ENCODE measurements at regions of chr6 and their contacts with region 1.

Region 1: GRCh38 chr6:160041608-160042007 is 72.7 kb downstream of the IGF2R start:
- DNase-seq: peak in 1 of 2 donors; percentile 67
- ATAC-seq: peak; percentile 58
- H3K4me3 ChIP-seq: no peak overlapping the region
- H3K27ac ChIP-seq: peak overlapping the region; percentile 20 to 23
- H3K4me1 ChIP-seq: peaks cover 2 to 3% of the 10 kb centered on the region in 2 donors
- H3K27me3 ChIP-seq: no peaks in the 10 kb centered on the region

Region 2: GRCh38 chr6:159852877-159853276 is 188.7 kb before region 1 on chr6:
- intact Hi-C with region 1: loop called in 1 of 2 experiments (anchors 10 kb)
- DNase-seq: no peak
- ATAC-seq: peak; percentile 48
- H3K4me3 ChIP-seq: no peak overlapping the region
- H3K27ac ChIP-seq: no peak overlapping the region
- H3K4me1 ChIP-seq: peaks cover 0 to 6% of the 10 kb centered on the region in 2 donors
- H3K27me3 ChIP-seq: no peaks in the 10 kb centered on the region

Region 3: GRCh38 chr6:159862103-159862502 is 179.5 kb before region 1 on chr6:
- intact Hi-C with region 1: loop called (anchors 10 kb)
- DNase-seq: no peak
- ATAC-seq: no peak
- H3K4me3 ChIP-seq: no peak overlapping the region
- H3K27ac ChIP-seq: no peak overlapping the region
- H3K4me1 ChIP-seq: no peaks in the 10 kb centered on the region
- H3K27me3 ChIP-seq: no peaks in the 10 kb centered on the region

Region 4: GRCh38 chr6:159968440-159969203 is 73.0 kb before region 1 on chr6 and contains the start of gene IGF2R:
- intact Hi-C with region 1: loop called (anchors 2 kb)
- DNase-seq: peak; percentile 95 to 96
- ATAC-seq: peak; percentile 95
- H3K4me3 ChIP-seq: peak within 1 kb of the TSS; percentile 90 to 93
- H3K27ac ChIP-seq: peak within 1 kb of the TSS; percentile 37 to 66
- H3K4me1 ChIP-seq: peaks cover 0 to 4% of the 10 kb centered on the region in 2 donors
- H3K27me3 ChIP-seq: no peaks in the 10 kb centered on the region
- total RNA-seq, gene IGF2R: 76.8 to 82.0 TPM

Measured in aorta (tissue), 5 donors.